ENCODE measurements at regions of chr7 and their contacts with region 1.

Region 1: DNA sequence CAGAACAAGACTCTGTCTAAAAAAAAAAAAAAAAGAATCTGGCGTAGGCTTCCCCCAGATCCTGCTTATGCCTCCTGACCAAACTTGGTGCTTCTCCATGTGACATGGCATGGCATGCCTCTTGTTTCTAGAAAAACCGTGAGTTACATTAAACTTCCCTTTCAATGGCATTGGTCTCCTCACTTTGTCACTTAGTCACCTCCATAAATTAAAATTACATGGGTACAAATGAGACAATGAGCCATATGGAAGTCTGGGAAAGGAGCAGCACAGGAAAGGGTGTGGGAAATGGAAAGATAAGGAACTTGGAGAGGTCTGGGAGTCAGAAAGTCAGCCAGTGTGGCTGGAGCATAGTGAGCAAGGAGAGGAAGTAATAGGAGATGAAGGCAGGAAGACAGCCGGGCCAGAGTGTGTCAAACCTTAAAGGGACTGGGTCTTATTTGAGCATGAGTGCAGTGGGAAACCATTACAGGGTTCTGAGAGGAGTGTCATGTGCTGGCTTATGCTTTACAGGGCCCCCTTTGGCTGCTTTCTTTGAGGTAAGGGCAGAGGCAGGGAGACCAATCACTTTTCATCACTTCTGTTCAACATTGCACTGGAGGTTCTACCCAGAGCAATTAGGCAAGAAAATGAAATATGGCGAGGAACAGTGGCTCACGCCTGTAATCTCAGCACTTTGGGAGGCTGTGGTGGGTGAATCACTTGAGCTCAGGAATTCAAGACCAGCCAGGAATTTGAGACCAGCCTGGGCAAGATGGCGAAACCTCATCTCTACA is 21.3 kb upstream of the ZMIZ2 start:
- DNase-seq: peak; percentile 80
- H3K4me3 ChIP-seq: no peak overlapping the region
- H3K27ac ChIP-seq: peak overlapping the region; percentile 67
- H3K4me1 ChIP-seq: peaks cover 16% of the 10 kb centered on the region
- H3K27me3 ChIP-seq: no peaks in the 10 kb centered on the region
- CTCF ChIP-seq: no peak
- POLR2A ChIP-seq: peak; percentile 48

Region 2: GRCh38 chr7:44638611-44639557 is 88.5 kb before region 1 on chr7:
- CTCF ChIA-PET with region 1: no interaction called
- POLR2A ChIA-PET with region 1: no interaction called
- dilution Hi-C with region 1: no loop called
- intact Hi-C with region 1: loop called (anchors 1 kb)
- DNase-seq: peak; percentile 67
- H3K4me3 ChIP-seq: no peak overlapping the region
- H3K27ac ChIP-seq: peak overlapping the region; percentile 88
- H3K4me1 ChIP-seq: peaks cover 47% of the 10 kb centered on the region
- H3K27me3 ChIP-seq: no peaks in the 10 kb centered on the region
- CTCF ChIP-seq: no peak
- POLR2A ChIP-seq: peak; percentile 37

Region 3: DNA sequence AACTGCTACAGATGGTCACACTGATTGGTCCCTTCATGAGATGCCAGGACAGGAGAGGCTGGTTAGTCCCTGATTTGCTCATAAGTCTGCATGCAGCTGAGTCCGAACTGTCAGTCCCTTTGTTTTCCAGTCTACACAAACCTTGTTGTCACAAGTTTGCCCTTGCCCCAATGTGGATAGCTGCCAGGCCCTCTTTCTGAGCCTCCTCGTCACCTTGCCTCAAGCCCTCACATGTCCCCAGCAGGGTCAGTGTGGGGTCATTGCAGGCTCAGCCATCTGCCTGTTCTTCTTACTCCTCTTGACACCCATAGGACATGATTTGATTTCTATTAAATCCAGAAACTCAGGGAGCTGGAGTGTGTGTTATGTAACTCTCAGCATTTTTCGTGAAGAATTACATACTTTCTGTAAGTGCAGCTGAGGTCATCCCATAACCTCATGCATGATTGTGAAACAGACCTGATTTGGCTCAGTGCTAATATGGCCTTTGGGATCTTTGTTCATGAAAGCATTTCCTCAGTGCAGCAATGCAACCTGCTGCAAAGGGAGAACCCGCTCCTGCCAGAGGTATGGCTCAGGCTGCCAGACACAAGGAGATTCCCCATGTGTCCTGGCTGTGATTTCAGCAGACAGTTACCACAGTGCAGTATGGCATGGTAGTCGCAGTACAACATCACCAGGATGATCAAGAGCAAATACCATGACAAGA is 48.7 kb before region 1 on chr7:
- CTCF ChIA-PET with region 1: no interaction called
- POLR2A ChIA-PET with region 1: no interaction called
- dilution Hi-C with region 1: no loop called
- intact Hi-C with region 1: no loop called
- DNase-seq: no peak
- H3K4me3 ChIP-seq: no peak overlapping the region
- H3K27ac ChIP-seq: no peak overlapping the region
- H3K4me1 ChIP-seq: no peaks in the 10 kb centered on the region
- H3K27me3 ChIP-seq: no peaks in the 10 kb centered on the region
- CTCF ChIP-seq: no peak
- POLR2A ChIP-seq: no peak

Measured in endothelial cell of umbilical vein (primary cell).